ENCODE measurements at regions of chr4 and their contacts with region 1.

Region 1: DNA sequence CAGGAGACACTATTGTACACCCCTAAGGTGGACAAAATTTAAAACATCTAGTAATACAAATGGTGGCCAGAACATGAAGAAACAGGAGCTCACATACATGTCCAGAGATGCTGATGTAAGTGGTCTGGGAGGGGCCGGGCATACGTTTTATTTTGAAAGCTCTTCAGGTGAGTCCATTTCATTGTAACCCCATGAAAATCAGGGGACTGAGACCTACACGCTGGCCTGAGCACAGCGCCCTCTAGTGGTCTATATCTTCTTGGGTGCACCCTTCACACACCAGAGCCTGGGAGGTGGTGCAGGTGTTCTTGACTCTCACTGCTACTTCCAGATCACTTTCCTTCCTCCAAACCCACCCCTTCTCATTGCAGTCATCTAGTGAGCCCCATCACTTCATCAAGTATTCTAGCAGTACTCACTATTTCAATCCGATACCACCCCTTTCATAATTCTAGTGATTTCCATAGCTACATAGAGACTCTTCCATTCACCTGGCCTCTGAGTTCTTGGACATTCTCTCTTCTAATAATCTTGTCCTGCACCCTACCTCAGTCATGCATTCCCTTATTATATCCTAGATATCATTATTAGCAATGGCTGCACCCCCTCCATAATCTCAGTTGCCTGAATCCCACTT is 4.3 kb upstream of the TLR6 start:
- DNase-seq: peak; percentile 39

Region 2: GRCh38 chr4:38873290-38873944 is 12.5 kb after region 1 on chr4:
- CTCF ChIA-PET with region 1: interaction called, 11 read pairs
- POLR2A ChIA-PET with region 1: no interaction called
- DNase-seq: peak; percentile 9

Region 3: GRCh38 chr4:39279416-39279815 is 418.5 kb after region 1 on chr4:
- CTCF ChIA-PET with region 1: no interaction called
- POLR2A ChIA-PET with region 1: no interaction called
- DNase-seq: no peak

Measured in HEK293T (cell line).